MCF 10A (cell line): ENCODE measurements at regions of chr10 and their contacts with region 1.

Region 1: GRCh38 chr10:102245101-102245931 is at the start of gene GBF1:
- DNase-seq: peak; percentile 100
- H3K4me3 Mint-ChIP-seq: peak within 1 kb of the TSS; percentile 99
- H3K27ac Mint-ChIP-seq: peak within 1 kb of the TSS; percentile 97
- H3K4me1 Mint-ChIP-seq: peaks cover 45% of the 10 kb centered on the region
- H3K27me3 Mint-ChIP-seq: no peaks in the 10 kb centered on the region
- CTCF ChIP-seq: no peak
- total RNA-seq, gene GBF1: 50.0 and 50.6 TPM in 2 replicates

Region 2: DNA sequence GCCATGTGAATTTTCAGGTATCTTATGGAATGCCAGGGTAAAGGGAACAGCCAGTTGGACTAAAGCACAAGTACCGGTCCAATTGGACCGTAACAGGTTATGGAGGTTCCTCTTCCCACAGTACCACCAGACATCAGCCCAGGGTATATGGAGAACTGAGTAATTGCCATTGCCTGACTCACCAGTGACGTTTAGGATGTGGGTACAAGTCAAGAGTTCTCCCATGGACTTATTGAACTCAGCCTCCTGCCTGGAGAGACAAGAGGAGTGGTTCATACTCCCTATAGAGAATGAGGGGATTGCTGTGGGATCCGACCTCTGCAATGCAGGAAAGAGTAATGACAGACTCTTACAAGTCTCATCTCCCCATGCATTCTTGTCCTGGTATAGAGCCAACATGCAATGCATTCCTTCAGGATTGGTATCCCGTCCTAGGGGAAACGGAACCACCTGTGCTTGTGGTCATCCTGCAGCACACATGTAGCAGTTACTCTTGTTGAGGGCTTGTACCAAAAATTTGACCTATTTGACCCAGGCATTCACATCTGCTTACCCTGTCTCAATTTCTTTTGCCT is 49.9 kb before region 1 on chr10:
- CTCF ChIA-PET with region 1: no interaction called
- POLR2A ChIA-PET with region 1: no interaction called
- intact Hi-C with region 1: no loop called
- DNase-seq: no peak
- H3K4me3 Mint-ChIP-seq: no peak overlapping the region
- H3K27ac Mint-ChIP-seq: no peak overlapping the region
- H3K4me1 Mint-ChIP-seq: no peaks in the 10 kb centered on the region
- H3K27me3 Mint-ChIP-seq: no peaks in the 10 kb centered on the region
- CTCF ChIP-seq: no peak

Region 3: DNA sequence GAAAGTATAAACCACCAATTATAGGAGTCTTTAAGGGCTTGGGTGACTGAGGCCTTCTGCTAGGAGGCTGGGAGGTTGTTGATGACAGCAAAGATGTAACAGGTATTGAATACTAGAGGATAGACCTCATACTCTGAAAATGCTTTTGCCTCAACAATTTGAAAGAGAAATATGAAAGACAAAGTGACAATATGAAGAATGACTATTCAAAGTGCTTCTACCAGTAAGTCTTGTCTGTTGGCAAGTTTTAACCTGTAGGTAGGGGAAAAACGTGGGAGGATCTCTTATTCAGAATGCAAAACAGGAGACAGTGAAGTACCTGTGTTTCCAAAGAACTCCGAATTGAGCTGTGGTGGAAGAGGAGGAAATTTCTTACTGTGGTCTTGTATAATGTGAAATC is 38.2 kb after region 1 on chr10:
- CTCF ChIA-PET with region 1: no interaction called
- POLR2A ChIA-PET with region 1: interaction called, 19 read pairs
- intact Hi-C with region 1: no loop called
- DNase-seq: peak; percentile 47
- H3K4me3 Mint-ChIP-seq: peak overlapping the region; percentile 8
- H3K27ac Mint-ChIP-seq: peak overlapping the region; percentile 2
- H3K4me1 Mint-ChIP-seq: peaks cover 28% of the 10 kb centered on the region
- H3K27me3 Mint-ChIP-seq: no peaks in the 10 kb centered on the region
- CTCF ChIP-seq: no peak